OCI-LY7 (cell line): ENCODE measurements at regions of chr17 and their contacts with region 1.

Region 1: GRCh38 chr17:8222630-8223356 is 12.4 kb upstream of the AURKB start:
- DNase-seq: peak; percentile 89
- H3K4me3 ChIP-seq: peak overlapping the region; percentile 80
- H3K27ac ChIP-seq: peak overlapping the region; percentile 88
- H3K4me1 ChIP-seq: peaks cover 21% of the 10 kb centered on the region
- CTCF ChIP-seq: no peak

Region 2: DNA sequence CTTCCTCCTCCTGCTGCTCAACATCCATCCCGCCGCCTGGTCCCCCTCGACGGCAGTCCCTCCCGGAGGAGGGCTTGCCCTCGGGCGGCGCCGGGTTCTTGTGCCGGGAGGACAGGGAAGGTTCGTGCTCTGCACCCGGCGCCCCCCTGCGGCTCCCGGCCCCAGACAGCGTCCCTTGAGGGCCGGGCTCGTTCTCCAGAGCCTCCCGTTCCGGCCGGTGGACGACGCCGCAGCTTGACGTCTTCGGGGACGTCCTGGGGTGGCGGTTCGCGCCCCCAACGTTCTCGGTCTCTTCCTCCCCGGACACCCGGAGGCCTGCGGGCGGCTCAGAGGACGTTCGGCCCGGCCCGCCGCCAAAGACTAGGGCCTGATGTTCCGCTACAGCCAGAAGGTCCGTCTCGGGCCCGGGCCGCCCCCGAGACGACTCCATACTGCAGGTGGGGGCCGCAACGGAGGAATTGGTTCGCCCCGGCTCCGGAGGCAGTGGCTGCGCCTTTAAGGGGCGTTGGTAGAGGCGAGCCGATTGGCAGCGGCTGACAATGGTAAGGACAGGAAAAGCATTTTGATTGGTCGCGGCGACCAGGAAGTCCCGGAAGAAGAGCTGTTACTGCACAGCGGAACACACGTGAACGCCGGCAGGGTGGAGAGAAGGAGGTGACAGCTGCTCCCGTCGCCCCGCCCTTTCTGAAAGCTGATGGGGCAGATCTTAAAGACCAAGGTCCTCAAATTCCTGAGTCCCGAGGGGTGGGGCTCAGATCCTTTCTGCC is 32.9 kb before region 1 on chr17 and contains the start of gene BORCS6:
- CTCF ChIA-PET with region 1: interaction called, 7 read pairs
- POLR2A ChIA-PET with region 1: interaction called, 16 read pairs
- intact Hi-C with region 1: loop called (anchors 1 kb)
- DNase-seq: peak; percentile 99
- H3K4me3 ChIP-seq: peak within 1 kb of the TSS; percentile 83
- H3K27ac ChIP-seq: peak within 1 kb of the TSS; percentile 92
- H3K4me1 ChIP-seq: peaks cover 39% of the 10 kb centered on the region
- CTCF ChIP-seq: peak; percentile 52
- total RNA-seq, gene BORCS6: 13.9 and 14.3 TPM in 2 replicates

Region 3: DNA sequence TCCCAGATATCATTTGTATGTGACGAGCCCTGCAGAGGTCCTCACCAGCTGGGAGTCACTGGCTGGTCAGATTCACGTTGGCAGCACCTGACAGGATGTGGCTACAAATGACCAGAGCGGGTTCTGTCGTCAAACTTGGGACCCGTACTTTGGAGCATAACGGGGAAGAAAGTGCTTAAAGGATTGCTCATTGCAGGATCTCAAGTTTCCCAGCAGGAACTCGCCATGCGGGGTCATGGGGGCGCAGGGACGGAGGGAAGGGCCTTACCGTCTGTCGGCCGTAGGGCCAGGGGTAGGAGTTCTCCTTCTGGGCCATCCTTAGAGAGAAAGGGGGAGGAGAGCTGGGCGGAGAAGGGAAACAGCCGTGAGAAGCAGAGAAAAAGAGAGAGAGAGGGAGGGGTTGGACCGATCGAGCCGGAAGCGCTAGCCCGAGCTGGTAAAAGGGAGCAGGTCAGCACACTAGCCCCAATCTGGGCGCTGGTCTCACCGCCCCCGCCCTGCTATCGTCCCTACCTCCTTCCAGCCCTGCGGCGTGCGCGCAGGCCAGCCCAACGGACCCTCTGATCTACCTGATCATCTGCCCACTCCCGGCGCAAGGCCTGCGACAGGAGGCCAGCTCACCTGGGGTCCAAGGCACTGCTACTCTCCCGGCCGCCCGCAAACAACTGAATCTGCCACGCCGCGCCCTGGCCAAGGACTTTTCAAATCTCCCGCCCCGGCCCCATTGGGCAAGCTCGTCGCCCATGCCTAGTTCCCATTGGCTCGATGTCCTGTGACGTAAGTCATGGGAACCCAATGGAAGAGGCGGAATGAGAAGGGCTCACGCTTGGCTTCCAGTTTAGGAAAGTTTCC is 12.7 kb before region 1 on chr17 and contains the start of gene AURKB:
- CTCF ChIA-PET with region 1: interaction called, 4 read pairs
- POLR2A ChIA-PET with region 1: interaction called, 47 read pairs
- intact Hi-C with region 1: loop called (anchors 1 kb)
- DNase-seq: peak; percentile 96
- H3K4me3 ChIP-seq: peak within 1 kb of the TSS; percentile 92
- H3K27ac ChIP-seq: peak within 1 kb of the TSS; percentile 88
- H3K4me1 ChIP-seq: peaks cover 19% of the 10 kb centered on the region
- CTCF ChIP-seq: no peak
- total RNA-seq, gene AURKB: 248 and 283 TPM in 2 replicates

Region 4: DNA sequence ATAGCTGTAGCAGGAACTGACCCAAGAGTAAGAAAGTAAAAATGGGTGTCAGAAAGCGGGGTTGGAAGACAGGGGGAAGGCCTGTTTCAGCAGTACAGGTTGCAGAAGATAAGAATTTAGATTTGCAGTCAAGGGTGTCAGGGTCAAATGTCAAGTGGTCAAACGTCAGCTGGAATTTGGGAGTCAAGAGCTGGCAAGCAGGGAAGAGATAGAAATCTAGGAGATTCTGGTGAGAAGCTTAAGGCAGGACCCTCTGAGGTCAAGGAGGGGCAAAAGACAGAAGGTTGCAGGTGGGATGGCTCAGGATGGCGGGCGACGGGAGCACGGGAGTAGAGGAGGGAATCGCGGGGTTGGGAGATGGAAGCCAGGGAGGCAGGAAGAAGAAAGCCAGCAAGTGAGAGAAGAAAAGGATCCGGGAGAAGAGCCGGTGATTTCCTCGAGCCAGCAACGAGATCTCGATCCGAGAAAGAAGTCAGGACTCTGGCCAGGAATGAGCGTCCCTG is 72.1 kb after region 1 on chr17:
- CTCF ChIA-PET with region 1: no interaction called
- POLR2A ChIA-PET with region 1: interaction called, 20 read pairs
- intact Hi-C with region 1: loop called (anchors 1 kb)
- DNase-seq: no peak
- H3K4me3 ChIP-seq: peak overlapping the region; percentile 80
- H3K27ac ChIP-seq: peak overlapping the region; percentile 63
- H3K4me1 ChIP-seq: peaks cover 26% of the 10 kb centered on the region
- CTCF ChIP-seq: no peak

Region 5: GRCh38 chr17:8300627-8301242 is 77.9 kb after region 1 on chr17:
- CTCF ChIA-PET with region 1: no interaction called
- POLR2A ChIA-PET with region 1: interaction called, 20 read pairs
- intact Hi-C with region 1: loop called (anchors 1 kb)
- DNase-seq: peak; percentile 87
- H3K4me3 ChIP-seq: no peak overlapping the region
- H3K27ac ChIP-seq: peak overlapping the region; percentile 4
- H3K4me1 ChIP-seq: peaks cover 6% of the 10 kb centered on the region
- CTCF ChIP-seq: peak; percentile 94

Region 6: GRCh38 chr17:8991514-8992285 is 768.9 kb after region 1 on chr17:
- CTCF ChIA-PET with region 1: no interaction called
- POLR2A ChIA-PET with region 1: no interaction called
- intact Hi-C with region 1: no loop called
- DNase-seq: peak; percentile 63
- H3K4me3 ChIP-seq: no peak overlapping the region
- H3K27ac ChIP-seq: no peak overlapping the region
- H3K4me1 ChIP-seq: no peaks in the 10 kb centered on the region
- CTCF ChIP-seq: peak; percentile 85